ENCODE measurements at regions of chr5 and their contacts with region 1.

Region 1: GRCh38 chr5:91280362-91281269 is 102.5 kb downstream of the ARRDC3 start:
- DNase-seq: peak; percentile 97
- H3K4me3 ChIP-seq: peak overlapping the region; percentile 61 to 71 (median 65)
- H3K27ac ChIP-seq: peak overlapping the region; percentile 89 to 95 (median 92)
- H3K4me1 ChIP-seq: peaks cover 3 to 46% (median 36%) of the 10 kb centered on the region in 4 donors
- H3K27me3 ChIP-seq: no peaks in the 10 kb centered on the region
- CTCF ChIP-seq: no peak
- EP300 ChIP-seq: peak; percentile 47
- POLR2A ChIP-seq: peak; percentile 57

Region 2: DNA sequence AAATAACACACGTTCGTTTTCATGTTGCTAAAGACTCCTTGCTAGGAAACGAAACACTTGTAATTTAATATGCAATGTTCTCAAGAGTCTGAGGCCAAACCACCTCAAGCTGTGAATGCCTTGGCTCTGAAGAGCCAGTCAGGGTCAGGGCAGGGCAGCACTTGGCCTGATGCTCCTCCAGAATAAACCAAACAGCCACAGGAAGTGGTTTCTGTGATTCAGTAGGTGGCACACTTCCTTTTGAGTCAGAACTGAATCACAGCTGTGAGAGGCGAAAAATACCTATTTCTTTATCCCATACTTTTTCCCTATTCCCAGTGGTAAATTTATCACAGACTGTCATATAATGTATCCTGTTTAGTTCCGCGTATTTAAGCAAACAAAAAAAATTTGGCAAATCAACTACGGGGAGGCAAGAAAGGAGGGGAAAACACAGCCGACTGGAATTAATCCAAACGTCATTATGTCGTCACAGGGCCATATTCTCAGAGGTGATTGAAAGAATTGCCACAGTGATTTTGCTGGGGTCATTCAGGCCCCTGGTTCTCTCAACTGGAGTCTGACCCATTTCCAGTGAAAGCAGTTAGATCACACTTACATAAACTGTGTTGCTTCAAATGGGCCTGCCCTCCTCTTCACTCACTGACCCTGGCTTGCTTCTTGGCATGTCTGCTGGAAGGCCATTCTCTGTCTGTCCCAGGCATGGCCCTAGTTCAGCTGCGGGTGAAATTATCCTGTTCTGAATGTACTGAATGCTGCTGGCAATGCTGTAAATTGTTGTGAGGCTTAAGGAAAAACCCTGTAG is 31.3 kb after region 1 on chr5:
- intact Hi-C with region 1: loop called (anchors 2 kb)
- DNase-seq: peak; percentile 95
- H3K4me3 ChIP-seq: no peak overlapping the region
- H3K27ac ChIP-seq: peak overlapping the region; percentile 76 to 81 (median 79)
- H3K4me1 ChIP-seq: peaks cover 39 to 47% (median 41%) of the 10 kb centered on the region in 4 donors
- H3K27me3 ChIP-seq: no peaks in the 10 kb centered on the region
- CTCF ChIP-seq: peak in 1 of 3 experiments; percentile 12
- EP300 ChIP-seq: no peak
- POLR2A ChIP-seq: no peak